CD8-positive, alpha-beta T cell (primary cell): ENCODE measurements at regions of chr4 and their contacts with region 1.

Region 1: DNA sequence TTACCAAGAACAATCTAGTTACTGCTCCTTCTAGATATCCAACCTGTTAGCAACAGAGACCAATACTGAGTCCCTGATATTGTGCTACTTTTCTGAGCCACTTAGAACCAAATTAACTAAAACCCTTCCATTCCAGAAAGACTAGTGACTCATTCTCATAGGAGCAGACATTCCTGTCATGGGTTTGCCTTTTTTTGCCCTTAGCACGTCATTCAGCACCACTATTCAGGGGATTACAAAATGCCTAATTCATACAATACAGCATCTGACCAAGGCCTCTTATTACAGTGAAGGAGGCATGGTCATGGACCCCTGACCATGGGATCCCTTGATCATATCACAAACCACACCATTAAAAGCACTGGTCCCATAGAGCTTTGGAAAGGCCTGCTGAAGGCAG is 123.8 kb upstream of the CXCL13 start:
- DNase-seq: no peak
- ATAC-seq: no peak
- H3K4me3 ChIP-seq: no peak overlapping the region
- H3K4me3 Mint-ChIP-seq: no peak overlapping the region
- H3K27ac ChIP-seq: no peak overlapping the region
- H3K27ac Mint-ChIP-seq: no peak overlapping the region
- H3K4me1 ChIP-seq: no peaks in the 10 kb centered on the region
- H3K4me1 Mint-ChIP-seq: no peaks in the 10 kb centered on the region
- H3K27me3 ChIP-seq: no peaks in the 10 kb centered on the region
- H3K27me3 Mint-ChIP-seq: no peaks in the 10 kb centered on the region
- CTCF ChIP-seq: no peak

Region 2: DNA sequence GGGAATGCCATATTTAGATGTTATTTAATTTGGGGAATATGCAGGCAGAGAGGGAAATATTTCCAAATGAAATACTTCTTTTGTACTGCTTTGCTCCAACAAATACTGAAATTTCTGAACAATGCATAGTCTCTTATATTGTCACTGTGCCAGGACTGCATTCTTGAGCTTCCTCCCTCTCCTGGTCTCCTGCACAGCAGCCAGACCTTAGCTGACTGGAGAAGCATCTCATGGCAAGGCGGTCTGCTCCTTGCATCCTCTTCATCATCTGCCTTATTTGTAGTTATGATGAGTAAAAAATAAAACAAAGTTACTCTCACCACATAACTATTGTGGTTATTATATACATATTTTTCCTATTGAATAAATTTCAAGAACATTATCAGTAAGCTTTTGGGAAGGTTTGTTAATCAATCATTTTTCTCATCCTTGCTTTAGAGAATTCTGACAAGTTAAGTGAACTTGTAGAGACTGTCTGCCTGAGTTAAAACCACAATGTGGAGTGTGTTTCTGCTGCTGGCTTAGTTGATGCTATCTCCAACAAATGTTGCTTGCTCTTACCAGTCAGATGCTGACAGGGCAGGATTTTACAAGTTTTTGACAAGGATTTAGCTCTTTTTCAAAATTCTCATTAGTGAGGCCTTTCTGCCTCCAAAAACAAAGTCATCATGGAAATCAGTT is 737.5 kb before region 1 on chr4:
- CTCF ChIA-PET with region 1: no interaction called
- POLR2A ChIA-PET with region 1: no interaction called
- intact Hi-C with region 1: loop called in 1 of 2 experiments (anchors 5 kb)
- DNase-seq: no peak
- ATAC-seq: no peak
- H3K4me3 ChIP-seq: no peak overlapping the region
- H3K4me3 Mint-ChIP-seq: no peak overlapping the region
- H3K27ac ChIP-seq: no peak overlapping the region
- H3K27ac Mint-ChIP-seq: no peak overlapping the region
- H3K4me1 ChIP-seq: no peaks in the 10 kb centered on the region
- H3K4me1 Mint-ChIP-seq: no peaks in the 10 kb centered on the region
- H3K27me3 ChIP-seq: no peaks in the 10 kb centered on the region
- H3K27me3 Mint-ChIP-seq: peaks cover 9% of the 10 kb centered on the region
- CTCF ChIP-seq: no peak

Region 3: GRCh38 chr4:77959566-77960338 is 477.9 kb after region 1 on chr4:
- CTCF ChIA-PET with region 1: no interaction called
- POLR2A ChIA-PET with region 1: no interaction called
- intact Hi-C with region 1: no loop called
- DNase-seq: peak in 2 of 9 experiments; percentile 42 to 59
- ATAC-seq: no peak
- H3K4me3 ChIP-seq: no peak overlapping the region
- H3K4me3 Mint-ChIP-seq: no peak overlapping the region
- H3K27ac ChIP-seq: no peak overlapping the region
- H3K27ac Mint-ChIP-seq: no peak overlapping the region
- H3K4me1 ChIP-seq: no peaks in the 10 kb centered on the region
- H3K4me1 Mint-ChIP-seq: peaks cover 5% of the 10 kb centered on the region
- H3K27me3 ChIP-seq: no peaks in the 10 kb centered on the region
- H3K27me3 Mint-ChIP-seq: no peaks in the 10 kb centered on the region
- CTCF ChIP-seq: peak; percentile 87